Activated CD8-positive, alpha-beta memory T cell treated with anti-CD3 and anti-CD28 coated beads, Interleukin-2, amount 10 ng/mL, durations not matched to agents 7 days and 5 days (primary cell): ENCODE measurements at regions of chr10 and their contacts with region 1.

Region 1: DNA sequence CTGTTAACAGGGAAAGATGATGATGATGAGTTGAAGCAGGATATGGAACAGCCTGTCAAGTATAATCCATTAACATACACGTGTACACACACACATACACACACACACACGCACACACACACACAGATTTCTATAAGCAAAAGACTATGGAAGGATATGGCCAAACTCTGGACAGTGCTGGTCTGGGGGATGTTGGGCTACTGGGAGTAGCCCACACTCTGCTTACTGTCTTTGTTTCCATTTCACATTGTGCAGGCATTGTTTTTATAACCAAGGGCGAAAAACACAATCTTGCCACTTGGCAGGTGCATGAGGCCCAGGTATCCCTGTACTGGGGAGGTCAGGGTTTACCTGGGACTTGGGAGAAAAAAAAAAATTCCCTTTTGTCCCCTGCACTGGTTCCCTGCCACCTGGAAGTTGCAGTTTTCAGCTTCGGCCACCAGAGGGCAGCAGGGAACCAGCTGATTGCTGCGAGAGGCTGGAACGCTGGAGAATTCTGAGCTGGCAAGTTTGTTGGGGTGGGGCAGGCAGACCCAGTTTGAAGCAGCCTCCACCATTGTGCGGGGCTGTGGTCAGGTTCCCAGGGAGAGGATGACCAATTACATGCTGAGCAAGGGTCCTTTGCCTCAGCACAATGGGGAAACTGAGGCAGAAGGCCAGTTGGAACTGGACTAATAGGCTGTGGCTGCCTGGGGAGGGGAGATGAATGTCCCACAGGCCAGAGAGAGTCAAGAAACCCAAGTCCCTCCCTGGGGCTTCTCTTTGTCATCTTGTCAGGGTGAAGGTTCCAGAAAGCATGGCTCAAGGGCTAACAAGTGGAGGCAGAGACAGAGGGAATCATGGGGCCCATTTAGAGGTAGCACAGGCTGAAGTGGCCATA is 27.3 kb downstream of the PPIF start:
- DNase-seq: peak; percentile 80
- ATAC-seq: peak; percentile 77
- H3K4me3 Mint-ChIP-seq: no peak overlapping the region
- H3K27ac Mint-ChIP-seq: no peak overlapping the region
- H3K4me1 Mint-ChIP-seq: peaks cover 3% of the 10 kb centered on the region
- H3K27me3 Mint-ChIP-seq: peaks cover 21% of the 10 kb centered on the region

Region 2: DNA sequence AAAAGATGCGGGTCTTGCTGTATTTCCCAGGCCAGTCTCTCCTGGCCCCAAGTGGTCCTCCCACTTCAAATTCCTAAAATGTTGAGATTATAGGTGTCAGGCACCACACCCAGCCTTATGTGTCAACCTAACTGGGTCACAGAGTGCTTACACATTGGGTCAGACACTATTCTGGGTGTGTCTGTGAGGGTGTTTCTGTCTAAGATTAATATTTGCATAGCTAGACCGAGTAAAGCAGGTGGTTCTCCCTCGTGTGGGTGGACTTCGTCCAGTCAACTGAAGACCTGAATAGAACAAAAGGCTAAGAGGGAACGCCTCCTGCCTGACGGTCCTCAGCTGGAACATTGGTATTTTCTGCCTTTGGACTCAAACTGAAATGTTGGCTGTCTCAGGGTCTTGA is 15.8 kb before region 1 on chr10:
- CTCF ChIA-PET with region 1: interaction called, 11 read pairs
- DNase-seq: peak; percentile 31
- ATAC-seq: no peak
- H3K4me3 Mint-ChIP-seq: no peak overlapping the region
- H3K27ac Mint-ChIP-seq: no peak overlapping the region
- H3K4me1 Mint-ChIP-seq: peaks cover 45% of the 10 kb centered on the region
- H3K27me3 Mint-ChIP-seq: peaks cover 13% of the 10 kb centered on the region

Region 3: GRCh38 chr10:79387974-79388850 is 13.7 kb after region 1 on chr10:
- CTCF ChIA-PET with region 1: interaction called, 12 read pairs
- DNase-seq: peak; percentile 21
- ATAC-seq: peak; percentile 8
- H3K4me3 Mint-ChIP-seq: no peak overlapping the region
- H3K27ac Mint-ChIP-seq: no peak overlapping the region
- H3K4me1 Mint-ChIP-seq: no peaks in the 10 kb centered on the region
- H3K27me3 Mint-ChIP-seq: no peaks in the 10 kb centered on the region

Region 4: GRCh38 chr10:79415736-79416577 is 41.4 kb after region 1 on chr10:
- CTCF ChIA-PET with region 1: no interaction called
- DNase-seq: no peak
- ATAC-seq: no peak
- H3K4me3 Mint-ChIP-seq: no peak overlapping the region
- H3K27ac Mint-ChIP-seq: no peak overlapping the region
- H3K4me1 Mint-ChIP-seq: peaks cover 10% of the 10 kb centered on the region
- H3K27me3 Mint-ChIP-seq: no peaks in the 10 kb centered on the region

Region 5: GRCh38 chr10:79468024-79468560 is 93.5 kb after region 1 on chr10:
- CTCF ChIA-PET with region 1: interaction called, 33 read pairs
- DNase-seq: no peak
- ATAC-seq: no peak
- H3K4me3 Mint-ChIP-seq: no peak overlapping the region
- H3K27ac Mint-ChIP-seq: no peak overlapping the region
- H3K4me1 Mint-ChIP-seq: no peaks in the 10 kb centered on the region
- H3K27me3 Mint-ChIP-seq: peaks cover 15% of the 10 kb centered on the region

Region 6: DNA sequence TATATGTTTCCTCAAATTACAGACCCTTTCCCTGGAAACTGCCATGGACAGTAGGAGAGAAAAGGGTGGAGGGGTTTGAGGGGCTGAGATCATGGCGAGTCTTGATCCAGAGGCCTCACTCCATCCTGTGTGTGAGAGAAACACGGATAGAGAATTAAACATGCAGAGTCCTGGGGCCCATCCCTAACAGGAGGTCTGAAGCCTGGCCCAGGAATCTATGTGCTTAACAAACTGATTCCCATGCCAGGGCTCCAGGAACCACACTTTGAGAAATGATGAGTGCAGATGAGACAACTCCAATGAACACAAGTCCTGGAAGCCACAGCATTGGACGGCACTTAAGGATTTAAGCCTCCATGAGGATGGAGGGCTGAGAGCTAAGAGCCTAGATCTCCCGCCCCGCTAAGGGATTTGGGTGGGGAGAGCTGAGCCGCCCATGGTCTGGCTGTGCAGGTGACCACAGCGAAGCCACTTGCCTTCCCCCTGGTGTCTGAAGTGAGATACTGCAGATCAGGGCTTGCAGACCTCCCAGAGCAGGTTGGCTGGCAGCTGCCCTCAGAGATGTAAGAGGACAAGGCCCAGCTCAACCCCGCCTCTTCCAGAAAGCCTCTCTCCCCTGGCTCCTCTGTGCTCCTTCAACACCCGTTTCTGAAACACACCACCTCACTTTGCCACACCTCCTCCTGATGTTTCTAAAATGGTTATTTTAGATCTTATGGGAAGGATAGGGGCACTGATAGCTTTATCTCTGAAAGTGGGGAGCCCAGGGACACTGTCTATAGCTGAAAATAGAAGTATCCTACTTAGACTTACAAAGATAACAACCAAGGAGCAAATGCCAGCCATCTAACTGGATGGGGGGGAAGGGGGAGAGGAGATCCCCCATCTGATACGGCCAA is 113.0 kb after region 1 on chr10:
- CTCF ChIA-PET with region 1: interaction called, 23 read pairs
- DNase-seq: peak; percentile 62
- ATAC-seq: peak; percentile 79
- H3K4me3 Mint-ChIP-seq: no peak overlapping the region
- H3K27ac Mint-ChIP-seq: no peak overlapping the region
- H3K4me1 Mint-ChIP-seq: peaks cover 5% of the 10 kb centered on the region
- H3K27me3 Mint-ChIP-seq: peaks cover 4% of the 10 kb centered on the region